CD4-positive, alpha-beta memory T cell (primary cell): ENCODE measurements at regions of chr22 and their contacts with region 1.

Region 1: GRCh38 chr22:39532215-39533071 is at the start of gene RPS19BP1:
- DNase-seq: peak; percentile 98 to 100 (median 99)
- H3K4me3 ChIP-seq: peak within 1 kb of the TSS; percentile 71 to 91
- H3K4me3 Mint-ChIP-seq: peak within 1 kb of the TSS; percentile 92 to 98 (median 96)
- H3K27ac ChIP-seq: peak within 1 kb of the TSS; percentile 93
- H3K27ac Mint-ChIP-seq: peak within 1 kb of the TSS; percentile 93 to 100 (median 97)
- H3K4me1 ChIP-seq: peaks cover 56% of the 10 kb centered on the region
- H3K4me1 Mint-ChIP-seq: peaks cover 35 to 61% (median 51%) of the 10 kb centered on the region in 4 donors
- H3K27me3 ChIP-seq: no peaks in the 10 kb centered on the region
- H3K27me3 Mint-ChIP-seq: no peaks in the 10 kb centered on the region
- total RNA-seq, gene RPS19BP1: 66.9 to 67.1 TPM

Region 2: DNA sequence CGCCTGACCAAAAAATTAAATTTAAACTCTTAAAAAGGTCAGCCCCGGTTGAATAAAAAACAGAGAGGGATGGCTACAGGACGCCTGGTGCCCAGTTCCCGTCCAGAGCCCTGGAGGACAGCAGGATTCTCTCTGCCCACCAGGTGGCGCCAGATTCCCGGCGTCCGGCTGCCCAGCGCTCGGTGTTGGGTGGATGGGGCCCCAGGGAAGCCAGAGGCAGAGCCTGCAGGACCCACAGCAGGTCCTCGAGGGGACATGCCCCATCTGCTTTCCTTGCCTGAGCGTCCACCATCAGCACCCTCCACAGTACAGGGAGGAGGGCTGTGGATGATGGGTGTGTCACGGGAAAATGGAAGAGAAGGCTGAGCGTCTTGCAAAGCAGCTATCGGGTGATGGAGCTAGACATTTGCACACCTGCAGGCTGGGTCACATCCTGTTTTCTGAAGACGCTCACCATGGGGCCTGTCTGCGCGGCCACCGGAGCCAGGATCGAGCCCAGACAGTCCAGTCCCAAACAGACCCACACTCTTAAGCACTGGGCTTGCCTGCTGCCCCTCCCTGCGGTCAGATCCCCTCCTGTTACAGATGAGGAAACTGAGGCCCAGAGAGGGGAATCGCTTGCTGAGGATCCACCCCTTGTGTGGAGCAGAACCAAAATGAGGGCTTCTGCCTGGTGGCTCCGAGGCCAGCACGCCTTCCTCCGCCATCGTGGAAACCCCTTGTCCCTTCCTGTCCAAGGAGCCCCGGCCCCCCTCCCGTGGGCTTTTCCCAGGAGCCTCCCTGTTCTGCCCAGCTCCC is 361.4 kb before region 1 on chr22:
- CTCF ChIA-PET with region 1: interaction called, 15 read pairs
- POLR2A ChIA-PET with region 1: interaction called, 9 read pairs
- intact Hi-C with region 1: loop called (anchors 2 kb)
- DNase-seq: peak; percentile 81 to 89 (median 83)
- H3K4me3 ChIP-seq: peak overlapping the region; percentile 49 to 63
- H3K4me3 Mint-ChIP-seq: peak overlapping the region; percentile 51 to 79 (median 68)
- H3K27ac ChIP-seq: peak overlapping the region; percentile 40
- H3K27ac Mint-ChIP-seq: peak overlapping the region; percentile 89 to 95 (median 92)
- H3K4me1 ChIP-seq: peaks cover 52% of the 10 kb centered on the region
- H3K4me1 Mint-ChIP-seq: peaks cover 28 to 49% (median 40%) of the 10 kb centered on the region in 4 donors
- H3K27me3 ChIP-seq: no peaks in the 10 kb centered on the region
- H3K27me3 Mint-ChIP-seq: peaks cover 0 to 2% of the 10 kb centered on the region in 2 donors

Region 3: GRCh38 chr22:39405346-39406085 is 126.9 kb before region 1 on chr22:
- CTCF ChIA-PET with region 1: interaction called, 19 read pairs
- POLR2A ChIA-PET with region 1: interaction called, 3 read pairs
- intact Hi-C with region 1: no loop called
- DNase-seq: no peak
- H3K4me3 ChIP-seq: no peak overlapping the region
- H3K4me3 Mint-ChIP-seq: peak overlapping the region in 1 of 8 donors; percentile 29
- H3K27ac ChIP-seq: no peak overlapping the region
- H3K27ac Mint-ChIP-seq: no peak overlapping the region
- H3K4me1 ChIP-seq: peaks cover 20% of the 10 kb centered on the region
- H3K4me1 Mint-ChIP-seq: peaks cover 29 to 57% (median 36%) of the 10 kb centered on the region in 4 donors
- H3K27me3 ChIP-seq: no peaks in the 10 kb centered on the region
- H3K27me3 Mint-ChIP-seq: no peaks in the 10 kb centered on the region

Region 4: GRCh38 chr22:39502109-39502788 is 30.2 kb before region 1 on chr22 and contains the start of gene MIEF1:
- CTCF ChIA-PET with region 1: interaction called, 345 read pairs
- POLR2A ChIA-PET with region 1: interaction called, 38 read pairs
- intact Hi-C with region 1: loop called (anchors 1 kb)
- DNase-seq: peak; percentile 79 to 91 (median 82)
- H3K4me3 ChIP-seq: peak within 1 kb of the TSS; percentile 63 to 66
- H3K4me3 Mint-ChIP-seq: peak within 1 kb of the TSS; percentile 95 to 99 (median 96)
- H3K27ac ChIP-seq: peak within 1 kb of the TSS; percentile 70
- H3K27ac Mint-ChIP-seq: peak within 1 kb of the TSS; percentile 78 to 98 (median 96)
- H3K4me1 ChIP-seq: peaks cover 31% of the 10 kb centered on the region
- H3K4me1 Mint-ChIP-seq: peaks cover 13 to 50% (median 35%) of the 10 kb centered on the region in 4 donors
- H3K27me3 ChIP-seq: no peaks in the 10 kb centered on the region
- H3K27me3 Mint-ChIP-seq: no peaks in the 10 kb centered on the region
- total RNA-seq, gene MIEF1: 40.5 to 44.3 TPM

Region 5: GRCh38 chr22:39543095-39543494 is 10.7 kb after region 1 on chr22:
- CTCF ChIA-PET with region 1: interaction called, 26 read pairs
- POLR2A ChIA-PET with region 1: no interaction called
- intact Hi-C with region 1: no loop called
- DNase-seq: no peak
- H3K4me3 ChIP-seq: no peak overlapping the region
- H3K4me3 Mint-ChIP-seq: no peak overlapping the region
- H3K27ac ChIP-seq: no peak overlapping the region
- H3K27ac Mint-ChIP-seq: no peak overlapping the region
- H3K4me1 ChIP-seq: peaks cover 7% of the 10 kb centered on the region
- H3K4me1 Mint-ChIP-seq: peaks cover 8 to 18% (median 15%) of the 10 kb centered on the region in 4 donors
- H3K27me3 ChIP-seq: peaks cover 3% of the 10 kb centered on the region
- H3K27me3 Mint-ChIP-seq: peaks cover 18 to 25% of the 10 kb centered on the region in 2 donors

Region 6: GRCh38 chr22:39580006-39580441 is 47.6 kb after region 1 on chr22:
- CTCF ChIA-PET with region 1: no interaction called
- POLR2A ChIA-PET with region 1: no interaction called
- intact Hi-C with region 1: no loop called
- DNase-seq: no peak
- H3K4me3 ChIP-seq: no peak overlapping the region
- H3K4me3 Mint-ChIP-seq: no peak overlapping the region
- H3K27ac ChIP-seq: no peak overlapping the region
- H3K27ac Mint-ChIP-seq: no peak overlapping the region
- H3K4me1 ChIP-seq: no peaks in the 10 kb centered on the region
- H3K4me1 Mint-ChIP-seq: no peaks in the 10 kb centered on the region
- H3K27me3 ChIP-seq: no peaks in the 10 kb centered on the region
- H3K27me3 Mint-ChIP-seq: peaks cover 1 to 8% of the 10 kb centered on the region in 2 donors

Region 7: DNA sequence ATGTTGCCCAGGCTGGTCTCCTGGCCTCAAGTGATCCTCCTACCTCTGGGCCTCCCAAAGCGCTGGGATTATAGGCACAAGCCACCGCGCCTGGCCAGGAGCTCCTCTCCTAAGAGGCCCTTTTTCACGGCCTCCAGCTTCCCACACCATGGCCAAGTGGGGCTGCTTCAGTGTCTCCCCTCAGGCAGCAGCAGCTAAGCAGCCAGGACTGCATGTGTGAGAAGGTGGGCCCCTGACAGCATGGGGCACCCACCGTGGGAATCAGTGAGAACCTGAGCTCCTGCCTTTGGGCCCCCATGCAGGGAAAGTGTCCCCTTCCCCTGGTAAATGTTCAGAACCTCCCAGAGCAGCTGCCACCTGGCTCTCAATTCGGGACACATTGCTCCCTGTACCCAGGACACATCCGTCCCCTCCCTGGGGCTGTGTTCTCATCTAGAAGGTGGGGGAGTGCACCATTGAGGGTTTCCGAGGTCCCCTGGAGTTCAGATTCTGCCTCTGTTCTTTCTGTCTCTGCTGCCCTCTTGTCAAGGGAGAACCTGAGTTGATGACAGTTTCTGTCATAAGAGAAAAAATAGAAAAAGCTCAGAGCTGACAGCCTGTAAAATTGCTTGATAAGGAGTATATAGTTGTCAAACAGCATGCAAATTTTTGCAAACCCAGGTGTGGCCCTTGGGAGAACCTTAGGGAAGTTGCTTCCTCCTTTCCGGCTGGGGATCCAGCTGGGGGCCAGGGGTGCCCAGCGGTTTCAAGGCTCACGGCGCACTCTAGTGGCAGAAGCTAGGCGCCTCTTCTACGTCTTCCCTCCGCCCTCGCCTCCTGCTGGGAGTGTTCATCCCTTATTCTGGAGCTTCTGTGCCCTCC is 492.0 kb after region 1 on chr22:
- CTCF ChIA-PET with region 1: interaction called, 179 read pairs
- POLR2A ChIA-PET with region 1: interaction called, 21 read pairs
- intact Hi-C with region 1: loop called (anchors 1 kb)
- DNase-seq: peak in 4 of 5 donors; percentile 41 to 48 (median 47)
- H3K4me3 ChIP-seq: no peak overlapping the region
- H3K4me3 Mint-ChIP-seq: no peak overlapping the region
- H3K27ac ChIP-seq: no peak overlapping the region
- H3K27ac Mint-ChIP-seq: no peak overlapping the region
- H3K4me1 ChIP-seq: no peaks in the 10 kb centered on the region
- H3K4me1 Mint-ChIP-seq: peaks cover 0 to 2% (median 0%) of the 10 kb centered on the region in 4 donors
- H3K27me3 ChIP-seq: no peaks in the 10 kb centered on the region
- H3K27me3 Mint-ChIP-seq: peaks cover 0 to 1% of the 10 kb centered on the region in 2 donors

Region 8: GRCh38 chr22:40177738-40178416 is 645.4 kb after region 1 on chr22 and contains the start of gene TNRC6B:
- CTCF ChIA-PET with region 1: no interaction called
- POLR2A ChIA-PET with region 1: no interaction called
- intact Hi-C with region 1: loop called (anchors 2 kb)
- DNase-seq: peak; percentile 88 to 94 (median 90)
- H3K4me3 ChIP-seq: peak within 1 kb of the TSS; percentile 56 to 84
- H3K4me3 Mint-ChIP-seq: peak within 1 kb of the TSS; percentile 79 to 97 (median 92)
- H3K27ac ChIP-seq: peak within 1 kb of the TSS; percentile 60
- H3K27ac Mint-ChIP-seq: peak within 1 kb of the TSS; percentile 84 to 98 (median 92)
- H3K4me1 ChIP-seq: peaks cover 67% of the 10 kb centered on the region
- H3K4me1 Mint-ChIP-seq: peaks cover 46 to 74% (median 58%) of the 10 kb centered on the region in 4 donors
- H3K27me3 ChIP-seq: no peaks in the 10 kb centered on the region
- H3K27me3 Mint-ChIP-seq: no peaks in the 10 kb centered on the region
- total RNA-seq, gene TNRC6B: 137 to 155 TPM